ENCODE measurements at regions of chr5 and their contacts with region 1.

Region 1: DNA sequence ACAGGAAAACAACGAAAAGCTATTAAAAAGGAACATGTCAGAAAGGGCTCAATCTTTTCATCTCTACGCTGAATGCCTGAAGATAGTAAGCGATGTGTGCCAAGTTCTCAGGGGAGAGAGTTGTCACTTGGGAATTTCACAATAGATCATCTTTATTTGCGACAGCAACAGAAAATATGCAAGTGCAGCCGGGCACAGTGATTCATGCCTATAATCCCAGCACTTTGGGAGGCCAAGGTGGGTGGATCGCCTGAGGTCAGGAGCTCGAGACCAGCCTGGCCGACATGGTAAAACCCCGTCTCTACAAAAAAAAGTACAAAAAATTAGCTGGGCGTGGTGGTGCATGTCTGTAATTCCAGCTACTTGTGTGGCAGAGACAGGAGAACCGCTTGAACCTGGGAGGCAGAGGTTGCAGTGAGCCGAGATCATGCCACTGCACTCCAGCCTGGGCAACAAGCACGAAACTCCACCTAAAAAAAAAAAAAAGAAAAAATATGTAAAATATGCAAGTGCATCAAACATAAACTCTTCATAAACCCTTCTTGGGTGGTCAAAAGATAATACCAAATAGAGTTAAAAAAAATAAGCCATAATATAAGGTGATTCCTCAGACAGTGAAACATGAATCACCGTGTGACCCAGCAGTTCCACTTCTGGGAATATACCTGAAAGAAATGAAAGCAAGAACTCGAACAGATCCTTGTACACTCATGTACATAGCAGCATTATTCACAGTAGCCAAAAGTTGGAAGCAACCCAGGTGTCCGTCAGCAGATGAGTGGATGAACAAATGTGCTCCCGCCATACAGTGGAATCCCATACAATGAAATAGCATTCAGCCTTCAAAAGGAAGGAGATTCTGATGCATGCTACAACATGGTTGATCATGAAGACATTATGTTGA is 16.2 kb downstream of the SFXN1 start:
- DNase-seq: peak; percentile 49
- H3K4me3 Mint-ChIP-seq: no peak overlapping the region
- H3K27ac Mint-ChIP-seq: peak overlapping the region; percentile 72
- H3K4me1 Mint-ChIP-seq: peaks cover 57% of the 10 kb centered on the region
- H3K27me3 Mint-ChIP-seq: no peaks in the 10 kb centered on the region

Region 2: GRCh38 chr5:175444060-175444904 is 50.2 kb before region 1 on chr5 and contains the start of gene DRD1:
- CTCF ChIA-PET with region 1: no interaction called
- POLR2A ChIA-PET with region 1: no interaction called
- intact Hi-C with region 1: no loop called
- DNase-seq: peak; percentile 59
- H3K4me3 Mint-ChIP-seq: peak within 1 kb of the TSS; percentile 51
- H3K27ac Mint-ChIP-seq: no peak within 1 kb of the TSS
- H3K4me1 Mint-ChIP-seq: peaks cover 10% of the 10 kb centered on the region
- H3K27me3 Mint-ChIP-seq: peaks cover 58% of the 10 kb centered on the region
- total RNA-seq, gene DRD1: not detected

Region 3: GRCh38 chr5:175478384-175479124 is 16.0 kb before region 1 on chr5 and contains the start of gene SFXN1:
- CTCF ChIA-PET with region 1: interaction called, 4 read pairs
- POLR2A ChIA-PET with region 1: interaction called, 3 read pairs
- intact Hi-C with region 1: loop called (anchors 2 kb)
- DNase-seq: peak; percentile 90
- H3K4me3 Mint-ChIP-seq: peak within 1 kb of the TSS; percentile 96
- H3K27ac Mint-ChIP-seq: peak within 1 kb of the TSS; percentile 96
- H3K4me1 Mint-ChIP-seq: peaks cover 46% of the 10 kb centered on the region
- H3K27me3 Mint-ChIP-seq: no peaks in the 10 kb centered on the region
- total RNA-seq, gene SFXN1: 298 to 300 TPM

Region 4: GRCh38 chr5:175840050-175840841 is 345.7 kb after region 1 on chr5:
- CTCF ChIA-PET with region 1: no interaction called
- POLR2A ChIA-PET with region 1: no interaction called
- intact Hi-C with region 1: no loop called
- DNase-seq: no peak
- H3K4me3 Mint-ChIP-seq: no peak overlapping the region
- H3K27ac Mint-ChIP-seq: no peak overlapping the region
- H3K4me1 Mint-ChIP-seq: no peaks in the 10 kb centered on the region
- H3K27me3 Mint-ChIP-seq: no peaks in the 10 kb centered on the region

Measured in activated CD4-positive, alpha-beta memory T cell treated with anti-CD3 and anti-CD28 coated beads for 36 hours (primary cell).